Activated B cell treated with CpG ODN at 0.5 μM for 24 hours (primary cell): ENCODE measurements at regions of chr15 and their contacts with region 1.

Region 1: GRCh38 chr15:66862878-66863335 is 160.9 kb downstream of the SMAD6 start:
- DNase-seq: peak; percentile 77
- ATAC-seq: peak; percentile 61
- H3K4me3 Mint-ChIP-seq: no peak overlapping the region
- H3K27ac Mint-ChIP-seq: peak overlapping the region; percentile 55
- H3K4me1 Mint-ChIP-seq: peaks cover 55% of the 10 kb centered on the region
- H3K27me3 Mint-ChIP-seq: no peaks in the 10 kb centered on the region
- CTCF ChIP-seq: peak; percentile 81

Region 2: GRCh38 chr15:66700802-66701421 is 162.0 kb before region 1 on chr15:
- CTCF ChIA-PET with region 1: no interaction called
- POLR2A ChIA-PET with region 1: interaction called, 5 read pairs
- intact Hi-C with region 1: loop called (anchors 2 kb)
- DNase-seq: peak; percentile 85
- ATAC-seq: peak; percentile 88
- H3K4me3 Mint-ChIP-seq: peak overlapping the region; percentile 88
- H3K27ac Mint-ChIP-seq: peak overlapping the region; percentile 70
- H3K4me1 Mint-ChIP-seq: peaks cover 22% of the 10 kb centered on the region
- H3K27me3 Mint-ChIP-seq: peaks cover 18% of the 10 kb centered on the region
- CTCF ChIP-seq: no peak

Region 3: DNA sequence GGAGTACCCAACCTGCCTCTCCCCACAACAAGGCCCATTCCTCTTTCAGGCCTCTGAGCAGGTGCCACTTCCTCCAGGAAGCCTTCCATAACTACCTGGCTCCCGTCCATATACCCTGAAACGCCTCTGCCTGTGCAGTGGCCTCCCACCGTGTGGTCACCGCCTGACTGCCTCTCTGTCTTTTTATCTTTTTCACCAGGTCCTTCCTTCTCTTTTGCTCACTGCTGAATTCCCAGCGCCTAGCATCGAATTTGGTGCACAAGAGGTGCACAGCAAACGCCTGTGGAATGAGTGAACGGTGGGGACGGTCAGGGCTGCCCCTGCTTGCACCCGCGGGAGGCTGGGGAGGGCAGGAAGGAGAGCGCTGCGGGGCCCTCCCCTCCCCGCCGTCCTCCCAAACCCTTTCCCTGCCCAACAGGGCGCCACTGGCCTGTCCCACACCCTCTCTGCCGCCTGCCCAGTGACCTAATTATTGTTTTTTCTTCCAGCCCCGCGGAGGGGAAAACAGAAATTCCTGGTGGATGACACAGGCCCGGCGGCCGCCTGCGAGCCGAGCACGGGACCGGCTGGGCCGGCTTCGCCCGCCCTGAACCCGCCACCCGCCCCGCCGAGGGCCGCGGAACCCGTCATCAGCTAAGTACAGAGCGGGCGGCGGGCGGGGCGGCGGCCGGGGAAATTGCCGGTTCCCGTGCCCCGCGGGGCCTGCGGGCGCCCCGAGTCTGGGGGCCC is 20.8 kb before region 1 on chr15:
- CTCF ChIA-PET with region 1: no interaction called
- POLR2A ChIA-PET with region 1: no interaction called
- intact Hi-C with region 1: loop called (anchors 1 kb)
- DNase-seq: peak; percentile 40
- ATAC-seq: peak; percentile 81
- H3K4me3 Mint-ChIP-seq: peak overlapping the region; percentile 68
- H3K27ac Mint-ChIP-seq: no peak overlapping the region
- H3K4me1 Mint-ChIP-seq: peaks cover 16% of the 10 kb centered on the region
- H3K27me3 Mint-ChIP-seq: peaks cover 20% of the 10 kb centered on the region
- CTCF ChIP-seq: no peak

Region 4: DNA sequence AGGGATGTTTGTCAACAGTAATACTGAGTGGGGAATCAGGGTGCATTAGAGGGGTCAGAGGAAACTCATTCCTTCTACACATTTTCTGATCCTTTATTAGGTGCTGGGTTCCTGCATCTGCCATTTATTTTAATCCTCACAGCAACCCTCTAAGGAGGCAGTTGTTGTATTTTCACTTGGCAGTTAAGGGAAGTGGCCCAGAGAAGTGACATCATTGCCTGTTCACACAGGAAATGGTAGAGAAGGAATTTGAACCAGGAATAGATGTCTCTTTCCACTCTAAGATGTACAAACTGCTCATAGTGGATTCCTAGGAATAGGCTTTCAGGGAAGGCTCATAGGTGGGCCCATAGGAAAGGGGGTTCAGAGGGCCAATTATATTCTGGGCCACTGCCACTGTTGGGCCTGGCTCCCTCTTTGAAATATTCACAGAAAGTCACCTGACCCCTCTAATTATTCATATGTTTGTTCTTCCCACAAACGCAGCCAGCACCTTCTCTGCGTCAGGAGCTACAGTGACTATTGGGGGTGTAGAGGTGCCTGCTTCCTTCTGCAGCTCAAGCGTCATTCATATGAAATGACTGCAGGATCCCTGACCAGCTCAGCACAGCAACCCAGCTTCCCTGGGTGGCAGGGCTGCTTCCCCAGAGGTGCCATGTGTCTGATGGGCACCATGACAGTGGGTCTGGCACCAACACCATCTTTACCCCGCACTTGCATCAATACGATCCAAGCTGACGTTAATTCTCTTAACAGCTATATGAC is 38.6 kb after region 1 on chr15:
- CTCF ChIA-PET with region 1: interaction called, 12 read pairs
- POLR2A ChIA-PET with region 1: no interaction called
- intact Hi-C with region 1: loop called (anchors 1 kb)
- DNase-seq: no peak
- ATAC-seq: no peak
- H3K4me3 Mint-ChIP-seq: no peak overlapping the region
- H3K27ac Mint-ChIP-seq: no peak overlapping the region
- H3K4me1 Mint-ChIP-seq: peaks cover 15% of the 10 kb centered on the region
- H3K27me3 Mint-ChIP-seq: peaks cover 3% of the 10 kb centered on the region
- CTCF ChIP-seq: no peak

Region 5: DNA sequence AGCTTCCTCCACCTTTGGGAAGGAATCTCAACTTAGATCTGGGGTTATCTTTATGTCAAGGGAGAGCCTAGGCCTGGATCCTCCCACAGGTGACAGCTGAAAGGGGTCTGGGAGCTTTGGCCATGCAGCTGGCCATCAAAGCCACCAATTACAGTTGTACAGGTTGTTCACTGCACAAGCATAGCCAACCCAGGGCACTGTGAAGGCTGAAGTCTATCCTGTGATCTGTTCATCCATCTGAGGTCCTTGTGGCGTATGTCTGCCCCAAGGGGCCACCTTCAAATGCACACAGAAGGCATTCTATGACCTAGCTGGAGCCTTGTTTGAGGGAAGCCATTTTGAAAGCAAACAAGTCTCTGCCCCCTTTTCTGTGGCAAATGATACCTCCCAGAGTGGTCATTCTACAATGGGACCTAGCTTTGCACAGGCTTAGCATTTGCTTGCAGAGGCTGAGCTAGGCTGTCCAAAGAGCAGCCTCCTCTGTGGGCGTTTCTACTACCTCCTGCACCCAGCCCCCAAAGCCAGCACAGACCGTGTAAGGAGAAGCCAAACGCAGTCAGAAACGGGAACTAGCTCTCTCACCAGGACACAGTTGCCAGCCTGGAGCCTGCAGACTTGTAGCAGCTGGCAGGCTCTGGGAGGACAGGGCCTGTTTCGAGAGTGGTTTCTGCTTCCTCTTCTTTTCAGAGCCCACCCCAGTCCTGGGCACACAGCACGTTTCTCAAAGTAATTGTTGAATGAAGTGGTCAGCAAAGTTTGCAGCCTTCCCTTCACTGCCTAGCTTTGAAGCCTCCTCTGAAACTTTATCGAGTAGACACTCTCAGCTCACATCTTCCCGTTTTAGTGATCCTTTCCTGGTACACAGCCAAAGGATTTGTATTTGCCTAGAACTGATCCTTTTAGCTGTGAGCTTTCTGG is 45.2 kb after region 1 on chr15:
- CTCF ChIA-PET with region 1: interaction called, 12 read pairs
- POLR2A ChIA-PET with region 1: no interaction called
- intact Hi-C with region 1: loop called (anchors 1 kb)
- DNase-seq: no peak
- ATAC-seq: peak; percentile 53
- H3K4me3 Mint-ChIP-seq: no peak overlapping the region
- H3K27ac Mint-ChIP-seq: peak overlapping the region; percentile 61
- H3K4me1 Mint-ChIP-seq: peaks cover 35% of the 10 kb centered on the region
- H3K27me3 Mint-ChIP-seq: peaks cover 3% of the 10 kb centered on the region
- CTCF ChIP-seq: no peak

Region 6: DNA sequence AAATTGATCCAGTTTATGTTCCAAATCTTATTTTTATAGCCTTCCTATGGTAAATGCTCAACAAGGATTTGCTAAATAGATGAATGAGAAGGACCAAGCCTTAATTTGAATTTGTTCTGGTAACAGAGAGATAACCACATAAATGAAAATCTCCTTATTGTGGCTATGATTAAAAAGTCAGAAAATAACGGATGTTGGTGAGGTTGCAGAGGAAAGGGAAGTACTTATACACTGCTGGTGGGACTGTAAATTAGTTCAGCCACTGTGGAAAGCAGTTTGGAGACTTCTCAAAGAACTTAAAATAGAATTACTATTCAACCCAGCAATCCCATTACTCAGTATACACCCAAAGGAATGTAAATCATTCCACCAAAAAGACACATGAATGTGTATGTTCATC is 365.4 kb after region 1 on chr15:
- CTCF ChIA-PET with region 1: no interaction called
- POLR2A ChIA-PET with region 1: no interaction called
- intact Hi-C with region 1: no loop called
- DNase-seq: no peak
- ATAC-seq: no peak
- H3K4me3 Mint-ChIP-seq: no peak overlapping the region
- H3K27ac Mint-ChIP-seq: no peak overlapping the region
- H3K4me1 Mint-ChIP-seq: peaks cover 17% of the 10 kb centered on the region
- H3K27me3 Mint-ChIP-seq: no peaks in the 10 kb centered on the region
- CTCF ChIP-seq: no peak

Region 7: DNA sequence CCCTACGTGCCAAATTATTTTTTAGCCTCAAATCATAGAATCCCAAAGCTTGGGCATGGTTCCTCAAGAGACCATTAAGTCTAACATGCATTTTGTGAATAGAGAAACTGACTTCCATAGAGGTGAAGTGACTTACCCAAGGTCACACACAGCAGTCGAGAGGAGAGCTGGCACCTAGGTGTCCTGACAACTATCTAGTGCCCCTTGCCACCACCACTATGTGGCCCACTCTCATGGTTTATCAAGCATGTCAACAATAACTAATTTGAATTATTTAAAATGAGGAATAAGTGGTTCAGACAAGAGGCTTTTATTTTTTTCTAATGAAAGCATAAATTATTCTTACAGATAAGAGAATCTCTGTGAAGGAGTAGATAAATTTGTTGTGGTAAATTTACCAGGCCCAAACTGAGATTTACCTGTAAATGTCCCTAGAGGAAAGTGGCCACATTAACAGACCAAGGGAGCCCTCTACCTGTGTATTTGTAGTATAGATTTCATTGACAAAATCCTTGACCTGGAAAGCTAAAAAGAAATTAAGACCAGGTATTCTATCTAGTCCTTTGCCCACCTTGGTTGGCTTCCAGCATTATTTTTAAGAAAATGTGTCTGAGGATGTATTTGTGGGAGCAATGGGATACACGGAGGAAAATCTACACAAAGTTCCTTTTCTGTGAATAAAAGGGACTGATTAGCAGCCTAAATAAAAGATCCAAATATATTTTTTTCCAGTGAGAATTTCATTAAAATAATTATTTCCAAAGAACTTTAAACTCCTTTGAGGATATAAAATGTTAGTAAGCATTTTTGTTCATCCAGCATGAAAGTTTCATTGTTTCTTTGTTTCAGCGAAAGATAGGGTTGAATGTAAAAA is 440.8 kb after region 1 on chr15:
- CTCF ChIA-PET with region 1: no interaction called
- POLR2A ChIA-PET with region 1: no interaction called
- intact Hi-C with region 1: loop called (anchors 5 kb)
- DNase-seq: no peak
- ATAC-seq: peak; percentile 56
- H3K4me3 Mint-ChIP-seq: no peak overlapping the region
- H3K27ac Mint-ChIP-seq: no peak overlapping the region
- H3K4me1 Mint-ChIP-seq: no peaks in the 10 kb centered on the region
- H3K27me3 Mint-ChIP-seq: no peaks in the 10 kb centered on the region
- CTCF ChIP-seq: no peak